ENCODE measurements at regions of chr11 and their contacts with region 1.

Region 1: DNA sequence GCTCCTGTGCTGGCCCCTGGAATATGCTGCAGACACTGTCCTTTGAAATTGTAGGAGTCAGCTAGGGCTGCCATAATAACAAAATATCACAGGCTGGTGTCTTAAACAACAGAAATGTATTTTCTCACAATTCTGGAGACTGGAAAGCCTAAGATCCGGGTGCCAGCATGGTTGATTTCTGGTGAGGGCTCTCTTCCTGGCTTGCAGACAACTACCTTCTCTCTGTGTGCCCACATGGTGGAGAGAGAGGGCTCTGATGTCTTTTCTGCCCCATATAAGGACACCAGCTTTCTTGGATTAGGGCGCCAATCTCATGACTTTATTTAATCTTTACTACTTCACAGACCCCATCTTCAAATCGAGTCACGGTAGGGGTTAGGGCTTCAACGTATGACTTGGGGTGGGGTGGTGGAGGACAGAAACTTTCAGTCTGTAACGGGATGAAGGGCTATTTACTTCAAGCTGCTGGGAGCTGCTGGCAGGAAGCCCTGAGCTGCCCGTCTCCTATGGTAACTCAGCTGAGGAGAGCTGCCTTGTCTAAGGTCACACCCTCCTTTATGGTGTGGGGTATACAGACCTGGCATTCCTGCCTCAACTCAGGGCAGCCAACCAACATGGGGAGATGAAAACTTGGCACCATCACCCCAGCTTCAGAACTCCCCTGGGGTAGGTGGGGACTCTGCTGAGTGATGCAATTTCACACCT is 142.9 kb upstream of the ZBED5 start:
- DNase-seq: peak in 2 of 3 donors; percentile 39 to 46
- ATAC-seq: peak; percentile 66
- H3K4me3 ChIP-seq: no peak overlapping the region
- H3K4me1 ChIP-seq: no peaks in the 10 kb centered on the region
- CTCF ChIP-seq: no peak

Region 2: GRCh38 chr11:10943968-10944367 is 56.8 kb before region 1 on chr11:
- intact Hi-C with region 1: loop called in 1 of 2 experiments (anchors 5 kb)
- DNase-seq: no peak
- ATAC-seq: peak; percentile 25
- H3K4me3 ChIP-seq: no peak overlapping the region
- H3K4me1 ChIP-seq: peaks cover 6% of the 10 kb centered on the region
- CTCF ChIP-seq: no peak

Region 3: DNA sequence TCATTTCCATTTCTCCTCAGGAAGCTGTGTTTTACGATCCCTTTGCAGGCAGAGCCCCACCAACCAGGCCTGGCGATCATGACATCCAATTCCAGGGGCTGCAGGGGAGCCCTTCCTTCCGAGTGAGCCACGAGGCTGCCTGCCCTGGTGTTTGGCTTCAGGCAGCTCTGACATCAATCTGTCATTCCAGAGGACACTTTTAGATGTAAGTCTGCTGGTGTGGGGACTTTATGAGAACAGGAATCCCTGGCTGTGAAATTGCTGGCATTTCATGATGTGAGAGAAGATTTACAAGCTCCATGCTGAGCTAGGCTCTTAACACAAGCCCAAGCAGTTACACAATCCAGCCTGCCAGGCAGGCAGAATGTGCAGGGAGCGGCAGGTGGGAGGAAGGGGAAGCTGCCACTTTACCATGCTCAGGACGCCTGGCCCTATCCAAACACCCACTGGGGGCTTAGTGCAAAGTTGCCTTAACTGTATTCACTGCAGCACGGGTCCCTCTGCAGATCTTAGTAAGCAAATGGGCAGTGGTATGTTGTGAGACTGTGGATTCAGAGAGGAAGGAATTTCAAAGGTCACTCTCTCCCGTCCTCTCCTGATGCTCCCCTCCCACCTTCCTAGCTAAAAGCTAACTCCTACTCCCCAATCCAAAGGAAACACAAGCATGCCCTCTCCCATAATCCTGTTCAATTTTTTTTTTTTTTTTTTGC is 1066.2 kb after region 1 on chr11:
- intact Hi-C with region 1: no loop called
- DNase-seq: peak in 2 of 3 donors; percentile 49 to 69
- ATAC-seq: peak; percentile 81
- H3K4me3 ChIP-seq: no peak overlapping the region
- H3K4me1 ChIP-seq: peaks cover 15% of the 10 kb centered on the region
- CTCF ChIP-seq: no peak